Testis (tissue), 5 donors: ENCODE measurements at regions of chr14 and their contacts with region 1.

Region 1: GRCh38 chr14:73295198-73295796 is 58.0 kb downstream of the PAPLN start:
- DNase-seq: peak; percentile 42
- H3K4me3 ChIP-seq: no peak overlapping the region
- H3K27ac ChIP-seq: no peak overlapping the region
- H3K4me1 ChIP-seq: no peaks in the 10 kb centered on the region
- H3K27me3 ChIP-seq: no peaks in the 10 kb centered on the region
- CTCF ChIP-seq: peak; percentile 60 to 67 (median 62)
- POLR2A ChIP-seq: no peak

Region 2: GRCh38 chr14:72665259-72665658 is 630.0 kb before region 1 on chr14:
- intact Hi-C with region 1: no loop called
- DNase-seq: no peak
- H3K4me3 ChIP-seq: no peak overlapping the region
- H3K27ac ChIP-seq: no peak overlapping the region
- H3K4me1 ChIP-seq: no peaks in the 10 kb centered on the region
- H3K27me3 ChIP-seq: no peaks in the 10 kb centered on the region
- CTCF ChIP-seq: no peak
- POLR2A ChIP-seq: no peak

Region 3: GRCh38 chr14:73472185-73473114 is 177.2 kb after region 1 on chr14:
- intact Hi-C with region 1: loop called (anchors 10 kb)
- DNase-seq: peak; percentile 11
- H3K4me3 ChIP-seq: no peak overlapping the region
- H3K27ac ChIP-seq: no peak overlapping the region
- H3K4me1 ChIP-seq: no peaks in the 10 kb centered on the region
- H3K27me3 ChIP-seq: no peaks in the 10 kb centered on the region
- CTCF ChIP-seq: peak; percentile 53 to 65 (median 63)
- POLR2A ChIP-seq: no peak